ENCODE measurements at regions of chr3 and their contacts with region 1.

Region 1: DNA sequence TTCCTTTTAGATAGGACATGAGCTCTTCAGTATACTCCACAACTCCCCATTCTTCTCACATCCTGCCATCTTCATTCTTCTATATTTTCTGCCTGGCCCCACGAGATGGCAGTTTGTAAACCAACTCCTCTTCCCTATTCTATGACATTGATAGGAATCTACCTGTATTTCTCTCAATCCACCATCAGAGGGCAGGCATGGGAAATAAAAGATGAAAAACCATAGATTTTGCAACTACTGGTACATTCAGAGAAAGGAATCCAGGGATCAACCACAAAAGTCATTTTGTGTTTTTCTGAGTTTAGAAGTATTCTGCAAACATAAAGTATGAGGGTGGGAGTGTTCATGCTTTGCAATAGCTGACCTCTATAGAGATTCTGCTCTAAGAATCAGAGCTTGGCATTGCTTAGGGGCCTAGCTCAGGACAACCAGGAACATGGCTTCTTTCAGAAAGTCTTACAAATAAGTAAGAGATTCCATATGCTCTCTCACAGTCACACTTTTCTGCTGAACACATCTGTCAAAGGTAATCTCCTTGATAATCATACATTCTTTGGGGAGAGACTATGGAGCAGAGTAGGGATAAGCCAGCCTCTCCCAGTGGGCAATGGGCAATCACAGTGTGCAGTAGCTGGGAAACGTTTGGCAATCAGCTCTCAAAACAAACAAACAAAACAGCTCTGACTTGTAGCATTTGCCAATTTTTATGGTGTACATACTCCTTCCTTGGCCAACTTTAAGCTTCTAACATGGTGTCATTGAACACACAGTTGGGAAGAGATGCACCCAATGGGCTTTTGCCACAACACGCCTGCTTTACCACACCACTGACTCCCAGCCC is 43.1 kb upstream of the SLC25A36 start:
- DNase-seq: no peak
- H3K4me3 Mint-ChIP-seq: no peak overlapping the region
- H3K27ac Mint-ChIP-seq: no peak overlapping the region
- H3K4me1 Mint-ChIP-seq: no peaks in the 10 kb centered on the region
- H3K27me3 Mint-ChIP-seq: peaks cover 12% of the 10 kb centered on the region

Region 2: GRCh38 chr3:140941434-140942220 is 43.1 kb after region 1 on chr3 and contains the start of gene SLC25A36:
- intact Hi-C with region 1: loop called (anchors 2 kb)
- DNase-seq: peak; percentile 95
- H3K4me3 Mint-ChIP-seq: peak within 1 kb of the TSS; percentile 92
- H3K27ac Mint-ChIP-seq: peak within 1 kb of the TSS; percentile 95
- H3K4me1 Mint-ChIP-seq: peaks cover 36% of the 10 kb centered on the region
- H3K27me3 Mint-ChIP-seq: peaks cover 12% of the 10 kb centered on the region
- total RNA-seq, gene SLC25A36: 49.5 and 52.3 TPM in 2 replicates

Region 3: GRCh38 chr3:140972833-140973232 is 74.3 kb after region 1 on chr3:
- intact Hi-C with region 1: loop called (anchors 1 kb)
- DNase-seq: no peak
- H3K4me3 Mint-ChIP-seq: no peak overlapping the region
- H3K27ac Mint-ChIP-seq: no peak overlapping the region
- H3K4me1 Mint-ChIP-seq: peaks cover 9% of the 10 kb centered on the region
- H3K27me3 Mint-ChIP-seq: no peaks in the 10 kb centered on the region

Region 4: DNA sequence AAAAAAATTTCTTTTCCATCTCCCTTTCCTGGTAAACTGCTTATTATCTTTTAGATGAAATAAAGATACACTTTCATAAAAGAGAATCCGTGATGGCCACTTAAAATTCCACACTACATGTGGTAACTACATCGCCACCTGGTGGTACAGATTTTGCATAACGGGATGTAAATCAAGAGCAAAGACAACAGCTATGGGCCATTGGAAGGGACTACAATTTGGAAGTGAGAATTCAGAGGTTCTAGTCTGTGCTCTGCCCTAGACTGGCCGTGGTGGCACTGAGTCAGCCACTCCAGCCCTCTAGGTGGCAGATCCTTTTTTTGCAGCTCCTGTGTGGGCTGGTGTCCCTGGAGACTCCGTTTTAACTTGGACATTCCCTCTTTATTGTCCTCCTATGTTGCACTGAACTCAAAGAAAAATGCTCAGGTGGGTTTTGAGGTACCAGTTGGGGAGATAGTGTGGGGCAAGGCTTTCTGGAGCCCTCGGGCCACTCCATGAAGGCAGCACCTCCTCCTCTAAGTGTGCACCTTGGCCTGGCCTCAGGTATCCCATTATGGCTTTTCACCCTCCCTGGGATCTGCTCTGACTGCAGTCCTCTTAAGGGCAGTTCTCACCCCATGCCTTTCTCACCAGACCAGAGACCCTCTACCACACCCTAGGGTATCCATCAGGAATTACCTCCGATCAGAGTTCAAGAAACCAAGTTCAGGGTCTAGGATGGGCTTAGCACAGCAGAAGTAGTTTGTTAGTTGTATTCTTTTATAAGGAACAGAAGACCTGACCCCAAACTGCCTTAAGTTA is 207.5 kb after region 1 on chr3:
- intact Hi-C with region 1: loop called (anchors 1 kb)
- DNase-seq: peak; percentile 42
- H3K4me3 Mint-ChIP-seq: no peak overlapping the region
- H3K27ac Mint-ChIP-seq: no peak overlapping the region
- H3K4me1 Mint-ChIP-seq: no peaks in the 10 kb centered on the region
- H3K27me3 Mint-ChIP-seq: peaks cover 3% of the 10 kb centered on the region

Region 5: DNA sequence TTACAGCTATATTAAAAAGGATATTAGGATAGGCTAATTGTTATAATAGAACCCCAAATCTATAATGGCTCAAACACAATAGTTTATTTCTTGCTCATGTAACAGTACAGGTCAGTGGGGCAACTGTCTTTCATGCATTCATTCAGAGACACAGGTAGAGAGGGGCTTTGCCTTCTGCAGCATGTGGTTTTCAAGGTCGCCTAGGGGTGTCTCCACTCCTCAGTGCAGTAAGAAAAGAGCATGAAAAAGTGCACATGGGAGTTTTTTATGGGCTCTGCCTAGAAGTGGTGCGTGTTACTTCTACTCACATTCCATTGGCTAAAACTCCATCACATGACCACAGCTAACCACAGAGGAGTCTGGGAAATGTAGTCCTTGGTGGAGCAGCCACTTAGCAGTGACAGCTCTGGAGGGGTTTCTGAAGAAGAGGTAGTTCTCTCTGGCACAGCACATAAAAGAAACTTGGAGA is 471.5 kb after region 1 on chr3:
- intact Hi-C with region 1: no loop called
- DNase-seq: peak; percentile 50
- H3K4me3 Mint-ChIP-seq: no peak overlapping the region
- H3K27ac Mint-ChIP-seq: no peak overlapping the region
- H3K4me1 Mint-ChIP-seq: peaks cover 27% of the 10 kb centered on the region
- H3K27me3 Mint-ChIP-seq: no peaks in the 10 kb centered on the region

Region 6: DNA sequence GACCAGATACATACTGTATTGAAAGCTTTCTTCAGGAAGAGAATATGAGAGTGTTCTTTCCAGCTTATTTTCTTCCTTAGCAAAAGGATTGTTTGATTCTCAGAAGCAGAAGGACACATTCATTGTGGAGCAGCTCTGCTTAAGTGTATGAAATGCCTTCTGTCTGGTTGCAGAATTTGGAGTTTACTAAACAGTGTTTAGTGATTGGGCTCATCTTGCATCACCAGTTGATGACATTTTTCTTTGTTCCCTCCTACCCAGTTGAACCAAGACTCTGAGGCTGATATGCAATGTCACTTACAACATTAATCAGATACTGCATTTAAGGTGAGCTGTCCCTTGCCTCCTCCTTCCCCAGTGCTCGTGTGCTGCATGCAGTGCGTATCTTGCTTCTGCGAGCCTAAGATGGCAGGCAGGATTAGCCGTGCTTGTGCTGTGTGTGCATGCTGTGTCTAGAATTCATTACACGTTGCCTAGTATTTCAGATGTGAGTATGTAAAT is 488.1 kb after region 1 on chr3:
- intact Hi-C with region 1: no loop called
- DNase-seq: no peak
- H3K4me3 Mint-ChIP-seq: no peak overlapping the region
- H3K27ac Mint-ChIP-seq: no peak overlapping the region
- H3K4me1 Mint-ChIP-seq: peaks cover 17% of the 10 kb centered on the region
- H3K27me3 Mint-ChIP-seq: peaks cover 9% of the 10 kb centered on the region